Heart right ventricle (tissue), 16 donors: ENCODE measurements at regions of chr9 and their contacts with region 1.

Region 1: DNA sequence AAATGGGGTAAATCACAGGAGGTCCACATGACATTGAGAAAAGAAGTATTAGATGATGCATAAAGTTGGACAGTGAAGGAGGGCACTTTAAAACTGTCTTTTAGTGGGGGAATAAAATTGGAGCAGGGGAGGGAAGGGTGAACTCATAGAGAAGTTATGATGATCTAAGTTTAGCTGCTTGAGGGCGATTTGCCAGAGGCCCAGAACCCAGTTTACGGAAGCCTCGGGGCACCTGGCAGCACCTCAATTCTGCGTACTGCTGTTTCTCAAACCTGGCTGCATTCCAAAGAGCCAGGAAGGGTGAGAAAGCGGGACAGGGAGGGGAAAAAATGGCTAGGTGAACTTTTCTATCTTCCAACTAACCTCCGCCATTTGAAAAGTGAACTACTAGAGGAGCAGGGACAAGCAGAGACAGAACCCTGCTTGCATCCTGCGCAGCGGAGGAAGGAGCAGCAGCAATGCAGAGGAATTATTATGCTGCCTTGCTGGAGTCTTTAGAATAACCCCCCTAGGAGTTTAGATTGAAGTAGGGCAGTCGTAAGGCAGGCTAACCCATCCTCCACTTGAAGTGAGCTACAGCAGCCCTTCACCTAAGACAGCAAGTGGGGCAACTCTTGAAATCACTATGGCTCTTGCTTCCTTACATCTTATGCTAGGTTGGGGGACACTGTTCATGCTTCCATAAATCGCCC is 316.8 kb downstream of the BRINP1 start:
- DNase-seq: peak; percentile 38 to 74
- ATAC-seq: peak; percentile 46 to 92 (median 84)
- H3K4me3 ChIP-seq: peak overlapping the region in 6 of 10 donors; percentile 12 to 36 (median 28)
- H3K27ac ChIP-seq: peak overlapping the region; percentile 37 to 88 (median 74)
- H3K4me1 ChIP-seq: peaks cover 0 to 26% (median 0%) of the 10 kb centered on the region in 9 donors
- H3K27me3 ChIP-seq: no peaks in the 10 kb centered on the region
- CTCF ChIP-seq: no peak

Region 2: DNA sequence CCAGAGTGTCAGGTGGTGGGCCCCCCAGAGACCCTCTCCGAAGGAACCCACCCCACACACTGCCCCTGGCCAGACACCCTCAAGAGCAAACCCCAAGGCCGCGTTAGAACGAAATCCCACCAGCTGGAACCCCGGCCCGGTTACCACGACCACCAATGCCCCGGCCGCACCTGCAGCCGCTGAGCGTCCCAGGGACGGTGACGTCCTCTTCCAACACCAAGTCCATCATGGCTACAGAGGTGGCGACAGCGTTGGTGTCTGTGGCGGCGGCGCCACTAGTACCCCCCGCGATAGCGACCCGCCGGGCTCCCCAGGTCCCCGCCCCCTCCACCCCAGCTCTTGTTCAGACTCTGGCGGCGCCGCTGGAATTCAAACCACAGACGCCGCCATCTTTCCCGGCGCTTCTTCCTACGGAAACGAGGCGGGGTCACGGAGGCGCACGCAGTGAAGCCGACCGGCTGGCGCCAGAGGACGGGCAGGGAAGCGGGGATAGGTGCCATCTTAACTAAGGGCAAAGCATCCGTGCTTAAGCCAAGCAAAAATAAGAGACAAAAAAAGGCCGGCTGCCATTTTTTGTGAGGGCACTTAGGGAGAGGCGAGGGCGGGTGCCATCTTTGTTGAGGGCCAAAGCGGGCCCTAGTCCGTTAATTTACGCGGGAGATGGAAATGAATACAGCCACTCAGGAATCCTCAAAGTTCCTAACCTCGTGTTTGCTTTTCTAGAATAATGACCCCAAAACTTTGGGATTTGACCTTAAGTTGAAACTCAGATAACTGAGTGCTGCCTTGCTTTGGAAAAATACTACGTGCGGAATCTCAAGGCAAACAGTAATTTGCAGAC is 1527.5 kb after region 1 on chr9 and contains the start of gene CDK5RAP2:
- intact Hi-C with region 1: loop called in 1 of 10 experiments (anchors 10 kb)
- DNase-seq: peak; percentile 93 to 96
- ATAC-seq: peak; percentile 96 to 99 (median 99)
- H3K4me3 ChIP-seq: peak within 1 kb of the TSS; percentile 80 to 100 (median 96)
- H3K27ac ChIP-seq: peak within 1 kb of the TSS in 9 of 10 donors; percentile 66 to 89 (median 75)
- H3K4me1 ChIP-seq: peaks cover 0 to 35% (median 16%) of the 10 kb centered on the region in 9 donors
- H3K27me3 ChIP-seq: no peaks in the 10 kb centered on the region
- CTCF ChIP-seq: no peak
- total RNA-seq, gene CDK5RAP2: 37.9 to 80.1 (median 54.5) TPM